ENCODE measurements at regions of chr19 and their contacts with region 1.

Region 1: DNA sequence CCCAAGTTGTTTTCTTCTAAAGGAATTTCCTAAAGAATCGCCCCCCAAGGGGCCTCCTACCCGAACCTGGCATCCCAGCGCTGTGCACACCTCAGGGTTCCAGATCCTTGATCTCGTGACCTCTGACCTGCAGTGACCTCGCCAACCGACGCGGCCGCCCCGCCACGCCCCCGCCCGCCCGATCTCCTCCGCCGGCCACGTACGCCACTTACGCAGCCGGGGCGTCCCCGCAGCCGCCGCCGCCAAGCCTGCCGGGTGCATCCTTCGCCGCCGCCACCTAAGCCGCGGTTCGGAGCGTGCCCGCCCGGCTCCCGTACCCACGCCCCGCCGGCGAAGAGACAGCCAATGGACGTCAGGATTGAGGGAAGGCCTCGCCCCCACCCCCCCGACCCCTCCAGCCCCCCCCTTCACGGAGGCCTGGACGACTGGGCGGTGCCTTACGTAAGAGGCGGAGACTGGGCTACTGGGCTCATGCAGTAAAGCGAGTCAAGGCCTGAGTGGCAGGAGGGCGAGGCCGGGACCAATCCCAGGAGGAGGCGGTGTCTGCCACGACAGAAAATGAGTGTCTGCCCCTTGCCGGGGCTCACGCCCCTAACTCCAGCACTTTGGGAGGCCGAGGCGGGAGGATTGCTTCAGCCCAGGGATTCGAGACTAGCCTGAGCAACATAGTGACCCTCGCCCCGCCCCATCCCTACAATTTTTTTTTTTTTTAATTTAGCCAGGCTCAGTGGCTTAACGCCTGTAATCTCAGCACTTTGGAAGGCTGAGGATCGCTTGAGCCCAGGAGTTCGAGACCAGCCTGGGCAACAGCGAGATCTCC is at the start of gene YIF1B:
- DNase-seq: peak; percentile 98
- ATAC-seq: peak; percentile 96
- H3K4me3 ChIP-seq: peak within 1 kb of the TSS; percentile 33 to 44
- H3K27ac ChIP-seq: peak within 1 kb of the TSS; percentile 20 to 43
- H3K4me1 ChIP-seq: no peaks in the 10 kb centered on the region
- H3K27me3 ChIP-seq: no peaks in the 10 kb centered on the region
- total RNA-seq, gene YIF1B: 19.5 to 25.8 TPM

Region 2: GRCh38 chr19:38245826-38246498 is 69.9 kb before region 1 on chr19:
- intact Hi-C with region 1: loop called (anchors 5 kb)
- DNase-seq: peak; percentile 82 to 93
- ATAC-seq: peak; percentile 36
- H3K4me3 ChIP-seq: no peak overlapping the region
- H3K27ac ChIP-seq: peak overlapping the region; percentile 48 to 94
- H3K4me1 ChIP-seq: peaks cover 3% of the 10 kb centered on the region in 2 donors
- H3K27me3 ChIP-seq: no peaks in the 10 kb centered on the region